Motor neuron (in vitro differentiated cells): ENCODE measurements at regions of chr14 and their contacts with region 1.

Region 1: DNA sequence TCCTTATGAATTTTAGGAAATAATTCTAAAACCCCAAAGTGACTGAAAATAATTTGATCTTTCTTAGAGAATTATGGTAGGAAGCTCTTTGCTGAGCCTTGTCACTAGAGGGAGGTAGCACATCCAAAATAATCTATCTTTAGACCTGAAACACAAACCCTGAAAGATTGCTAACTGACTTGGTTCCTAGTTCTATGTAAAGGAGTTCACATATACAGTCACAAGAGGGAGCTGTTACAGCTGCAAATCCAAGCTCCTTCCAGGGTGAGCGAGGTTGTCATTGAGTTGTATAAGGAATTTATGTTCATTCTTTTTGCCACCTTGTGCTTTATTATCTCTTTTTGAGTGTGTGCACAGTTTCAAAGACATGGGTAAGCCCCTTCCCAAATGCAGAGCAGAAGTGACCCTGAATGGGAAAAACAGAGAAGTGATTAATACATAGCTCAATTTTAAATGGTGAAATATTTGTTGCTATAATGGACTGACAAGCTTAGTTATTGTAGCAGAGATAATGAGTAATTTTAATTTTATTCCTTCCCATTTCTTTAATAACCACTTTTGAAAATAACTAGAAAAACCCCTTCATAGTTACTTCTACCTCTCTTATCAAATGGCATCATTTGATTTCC is 387.9 kb downstream of the DAD1 start:
- ATAC-seq: peak in 4 of 8 experiments; percentile 62 to 96 (median 87)
- H3K4me3 ChIP-seq: no peak overlapping the region
- H3K27ac ChIP-seq: no peak overlapping the region
- H3K4me1 ChIP-seq: no peaks in the 10 kb centered on the region

Region 2: GRCh38 chr14:21326972-21327371 is 874.1 kb before region 1 on chr14:
- in situ Hi-C with region 1: no loop called
- ATAC-seq: peak in 2 of 8 experiments; percentile 39 to 64
- H3K4me3 ChIP-seq: no peak overlapping the region
- H3K27ac ChIP-seq: no peak overlapping the region
- H3K4me1 ChIP-seq: no peaks in the 10 kb centered on the region

Region 3: GRCh38 chr14:22122227-22122818 is 78.8 kb before region 1 on chr14:
- in situ Hi-C with region 1: loop called in 1 of 9 experiments (anchors 10 kb)
- ATAC-seq: peak in 3 of 8 experiments; percentile 32 to 48 (median 41)
- H3K4me3 ChIP-seq: no peak overlapping the region
- H3K27ac ChIP-seq: no peak overlapping the region
- H3K4me1 ChIP-seq: no peaks in the 10 kb centered on the region